ENCODE measurements at regions of chr1 and their contacts with region 1.

Region 1: GRCh38 chr1:26378088-26378878 is 5.7 kb upstream of the ZNF683 start:
- DNase-seq: peak; percentile 92
- H3K4me3 ChIP-seq: peak overlapping the region; percentile 37
- H3K27ac ChIP-seq: peak overlapping the region; percentile 98
- H3K27me3 ChIP-seq: no peaks in the 10 kb centered on the region
- CTCF ChIP-seq: no peak

Region 2: DNA sequence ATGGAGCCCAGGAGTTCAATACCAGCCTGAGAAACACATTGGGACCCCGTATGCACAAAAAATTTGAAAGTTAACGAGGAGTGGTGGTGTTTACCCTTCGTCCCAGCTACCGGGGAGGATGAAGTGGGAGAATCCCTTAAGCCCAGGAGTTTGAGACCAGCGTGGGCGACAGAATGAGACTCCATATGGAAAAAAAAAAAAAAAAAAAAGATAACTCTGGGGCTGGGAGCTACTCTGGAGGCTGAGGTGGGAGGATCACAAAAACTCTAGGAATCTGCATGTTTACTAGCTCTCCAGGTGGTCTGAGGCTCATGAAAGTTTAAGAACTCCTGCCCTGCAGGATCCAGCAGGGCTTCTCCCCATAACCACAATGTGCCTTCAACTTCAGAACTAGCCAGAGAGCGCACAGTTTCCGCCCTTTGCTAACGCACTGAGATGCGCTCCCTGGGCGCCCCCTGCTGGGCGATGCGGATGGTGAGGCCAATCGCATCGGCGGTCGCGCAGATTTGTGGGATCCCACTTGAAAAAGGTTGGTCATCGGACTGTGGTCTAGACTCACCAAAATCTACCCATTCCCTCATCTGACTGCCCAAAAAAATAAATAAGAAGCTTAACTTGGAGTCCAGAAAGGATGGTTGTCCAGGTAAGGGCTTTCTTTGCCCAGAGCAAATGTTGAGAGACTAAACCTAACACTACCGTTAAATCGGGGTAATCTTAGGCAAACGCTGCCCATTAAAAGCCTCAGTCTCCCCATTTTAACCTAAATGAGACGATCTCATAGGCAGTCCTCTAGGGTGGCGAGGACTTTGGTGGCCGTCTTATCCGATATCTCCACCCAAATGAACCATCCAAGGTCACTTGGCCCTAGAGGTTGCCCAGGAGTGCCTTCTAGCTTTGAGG is 14.5 kb before region 1 on chr1:
- CTCF ChIA-PET with region 1: interaction called, 120 read pairs
- POLR2A ChIA-PET with region 1: no interaction called
- DNase-seq: peak; percentile 15
- H3K4me3 ChIP-seq: no peak overlapping the region
- H3K27ac ChIP-seq: no peak overlapping the region
- H3K27me3 ChIP-seq: peaks cover 56% of the 10 kb centered on the region
- CTCF ChIP-seq: peak; percentile 97

Region 3: GRCh38 chr1:26431979-26432695 is 53.9 kb after region 1 on chr1 and contains the start of gene DHDDS:
- CTCF ChIA-PET with region 1: no interaction called
- POLR2A ChIA-PET with region 1: no interaction called
- DNase-seq: peak; percentile 96
- H3K4me3 ChIP-seq: peak within 1 kb of the TSS; percentile 87
- H3K27ac ChIP-seq: peak within 1 kb of the TSS; percentile 63
- H3K27me3 ChIP-seq: peaks cover 4% of the 10 kb centered on the region
- CTCF ChIP-seq: no peak
- polyA plus RNA-seq, gene DHDDS: 45.0 and 51.7 TPM in 2 replicates

Region 4: GRCh38 chr1:26799479-26800142 is 421.3 kb after region 1 on chr1:
- CTCF ChIA-PET with region 1: no interaction called
- POLR2A ChIA-PET with region 1: no interaction called
- DNase-seq: no peak
- H3K4me3 ChIP-seq: peak overlapping the region; percentile 32; the same call in 1 of the 2 replicates
- H3K27ac ChIP-seq: peak overlapping the region; percentile 69
- H3K27me3 ChIP-seq: no peaks in the 10 kb centered on the region
- CTCF ChIP-seq: no peak

Measured in AG04450 (cell line).